A673 (cell line): ENCODE measurements at regions of chr3 and their contacts with region 1.

Region 1: GRCh38 chr3:196251918-196252317 is 35.6 kb downstream of the SLC51A start:
- DNase-seq: no peak
- H3K4me3 ChIP-seq: no peak overlapping the region
- H3K27ac ChIP-seq: no peak overlapping the region
- H3K4me1 ChIP-seq: no peaks in the 10 kb centered on the region
- H3K27me3 ChIP-seq: no peaks in the 10 kb centered on the region
- CTCF ChIP-seq: no peak

Region 2: DNA sequence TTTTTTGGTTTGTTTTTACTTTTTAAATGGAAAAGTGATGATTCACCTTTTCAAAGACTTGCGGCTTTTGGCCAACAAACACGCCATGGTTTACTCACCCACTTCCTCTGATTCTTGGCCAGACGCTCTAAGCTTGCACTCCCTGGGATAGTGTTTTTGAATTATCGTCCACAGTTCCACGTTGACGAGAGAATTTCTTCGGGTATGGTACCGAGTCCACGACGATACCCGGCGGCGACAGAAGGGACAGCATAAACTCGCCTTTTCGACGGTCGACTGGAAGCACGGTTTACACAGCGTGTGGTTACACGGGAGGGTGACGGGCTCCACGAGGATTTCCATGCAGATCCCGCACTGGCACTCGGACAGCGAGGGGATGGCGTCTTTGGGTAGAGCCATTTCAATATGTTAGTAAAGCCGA is 250.9 kb after region 1 on chr3:
- CTCF ChIA-PET with region 1: no interaction called
- POLR2A ChIA-PET with region 1: no interaction called
- intact Hi-C with region 1: loop called (anchors 5 kb)
- DNase-seq: peak; percentile 62
- H3K4me3 ChIP-seq: peak overlapping the region; percentile 87
- H3K27ac ChIP-seq: peak overlapping the region; percentile 83
- H3K4me1 ChIP-seq: no peaks in the 10 kb centered on the region
- H3K27me3 ChIP-seq: no peaks in the 10 kb centered on the region
- CTCF ChIP-seq: no peak

Region 3: DNA sequence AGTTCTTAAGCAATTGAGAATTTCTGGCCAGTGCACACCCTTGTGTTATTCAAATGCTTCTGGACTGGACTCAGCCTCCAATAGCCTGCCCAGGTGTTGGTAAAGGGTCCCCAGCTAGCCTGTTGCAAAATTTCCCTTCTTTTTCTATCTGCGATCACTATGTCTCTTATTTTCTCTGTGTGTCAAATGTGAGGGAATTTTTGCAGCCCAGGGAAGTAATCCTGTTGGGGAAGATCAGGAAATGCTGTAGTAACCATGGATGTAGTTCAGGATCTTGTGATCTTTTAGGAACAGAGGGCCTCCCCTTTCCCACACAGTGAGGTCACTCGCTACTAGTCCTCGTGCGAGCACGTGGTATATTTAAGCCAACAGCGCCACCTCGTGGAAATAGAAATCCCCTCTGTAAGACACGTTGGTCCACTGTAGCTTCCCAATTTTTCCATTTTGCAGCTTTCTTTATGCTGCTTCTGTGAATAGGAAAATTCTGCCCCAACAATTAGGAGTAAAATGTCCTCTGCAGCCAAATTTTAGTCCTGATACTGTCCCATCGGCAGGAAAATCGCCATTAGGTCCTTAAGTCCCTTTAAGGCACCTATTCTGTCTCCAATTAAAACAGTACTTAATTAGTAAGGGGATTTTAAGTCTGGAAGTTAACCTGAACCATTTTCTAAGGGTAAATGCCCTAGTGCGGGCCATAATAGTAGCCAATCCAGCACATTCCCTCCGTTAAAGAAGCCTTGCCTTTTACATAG is 267.2 kb after region 1 on chr3:
- CTCF ChIA-PET with region 1: interaction called, 10 read pairs
- POLR2A ChIA-PET with region 1: no interaction called
- intact Hi-C with region 1: loop called (anchors 1 kb)
- DNase-seq: peak; percentile 79
- H3K4me3 ChIP-seq: no peak overlapping the region
- H3K27ac ChIP-seq: no peak overlapping the region
- H3K4me1 ChIP-seq: no peaks in the 10 kb centered on the region
- H3K27me3 ChIP-seq: no peaks in the 10 kb centered on the region
- CTCF ChIP-seq: peak; percentile 48

Region 4: DNA sequence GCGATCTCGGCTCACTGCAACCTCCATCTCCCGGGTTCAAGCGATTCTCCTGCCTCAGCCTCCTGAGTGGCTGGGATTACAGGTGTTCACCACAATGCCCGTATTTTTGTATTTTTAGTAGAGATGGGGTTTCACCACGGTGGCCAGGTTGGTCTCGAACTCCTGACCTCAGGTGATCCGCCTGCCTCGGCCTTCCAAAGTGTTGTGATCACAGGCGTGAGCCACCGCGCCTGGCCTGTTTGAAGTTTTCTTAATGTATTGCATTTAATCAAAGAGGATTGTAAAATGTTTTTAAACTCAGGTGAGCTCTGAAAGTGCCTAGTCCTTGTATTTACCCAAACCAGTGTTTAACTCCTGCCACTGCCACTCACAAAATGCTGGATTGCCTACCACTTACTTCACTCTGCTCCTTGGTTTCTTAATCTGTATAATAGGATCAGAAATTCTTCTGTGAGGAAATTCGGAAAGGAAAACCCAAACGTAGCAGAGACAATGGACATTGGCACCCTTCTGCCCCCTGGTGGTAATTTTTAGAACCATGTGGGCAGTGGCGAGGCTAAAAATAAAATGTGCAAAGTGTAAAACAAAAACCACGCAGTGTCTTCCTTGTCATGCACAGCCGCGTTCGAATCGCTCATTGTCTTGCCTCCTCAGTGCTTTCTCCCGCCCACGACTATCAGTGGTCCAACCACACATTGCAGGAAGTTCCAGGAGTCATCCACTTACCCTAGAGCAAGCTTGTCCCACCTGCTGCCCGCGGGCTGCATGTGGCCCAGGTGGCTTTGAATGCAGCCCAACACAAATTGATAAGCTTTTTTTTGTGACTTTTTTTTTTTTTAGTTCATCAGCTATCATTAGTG is 432.9 kb after region 1 on chr3:
- CTCF ChIA-PET with region 1: no interaction called
- POLR2A ChIA-PET with region 1: no interaction called
- intact Hi-C with region 1: loop called (anchors 5 kb)
- DNase-seq: peak; percentile 83
- H3K4me3 ChIP-seq: no peak overlapping the region
- H3K27ac ChIP-seq: no peak overlapping the region
- H3K4me1 ChIP-seq: peaks cover 40% of the 10 kb centered on the region
- H3K27me3 ChIP-seq: no peaks in the 10 kb centered on the region
- CTCF ChIP-seq: peak; percentile 90

Region 5: DNA sequence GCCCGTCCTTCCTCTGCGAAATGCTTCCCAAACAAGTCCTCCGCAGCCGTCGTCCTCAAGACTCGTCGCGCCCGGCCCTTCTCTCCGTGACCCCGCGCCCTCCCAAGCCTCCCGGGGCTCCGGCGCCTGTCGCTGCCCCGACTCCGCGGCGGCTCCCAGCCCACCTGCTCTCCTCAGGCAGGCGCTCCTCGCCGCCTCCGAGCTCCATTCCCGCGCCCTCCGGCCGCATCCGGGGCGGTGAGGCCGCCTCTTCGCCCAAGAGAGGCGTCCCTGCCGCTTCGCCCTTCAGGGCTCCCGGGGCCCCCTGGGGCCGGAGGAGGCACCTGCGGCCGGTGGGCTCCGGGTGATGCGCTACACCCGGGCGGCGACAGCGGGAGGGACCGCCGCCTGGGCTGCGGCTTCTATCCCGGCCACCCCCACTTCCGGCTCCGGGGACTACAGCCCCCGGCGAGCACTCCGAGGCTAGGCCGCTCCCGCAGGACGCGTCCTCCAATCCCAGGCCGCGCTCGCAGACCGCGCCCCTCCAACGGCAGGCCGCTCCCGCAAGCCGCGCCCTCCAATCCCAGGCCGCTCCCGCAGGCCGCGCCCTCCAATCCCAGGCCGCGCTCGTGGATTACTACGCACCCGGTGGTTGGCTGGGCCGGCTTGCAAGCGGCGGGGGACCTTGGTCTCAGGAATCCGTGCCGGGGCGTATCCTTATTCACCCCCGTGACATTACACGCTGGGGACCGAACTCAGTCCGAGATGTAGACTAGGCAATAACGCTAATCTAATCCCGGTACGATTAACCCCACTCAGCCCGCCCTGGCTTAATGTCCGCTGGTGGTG is 1484.8 kb after region 1 on chr3 and contains the start of gene RUBCN:
- CTCF ChIA-PET with region 1: no interaction called
- POLR2A ChIA-PET with region 1: no interaction called
- intact Hi-C with region 1: no loop called
- DNase-seq: peak; percentile 99
- H3K4me3 ChIP-seq: peak within 1 kb of the TSS; percentile 98
- H3K27ac ChIP-seq: peak within 1 kb of the TSS; percentile 72
- H3K4me1 ChIP-seq: peaks cover 12% of the 10 kb centered on the region
- H3K27me3 ChIP-seq: no peaks in the 10 kb centered on the region
- CTCF ChIP-seq: no peak
- total RNA-seq, gene RUBCN: 24.9 and 25.6 TPM in 2 replicates